ENCODE measurements at regions of chr7 and their contacts with region 1.

Region 1: GRCh38 chr7:73738612-73739374 is at the start of gene ABHD11:
- DNase-seq: peak; percentile 97 to 98 (median 97)
- H3K4me3 ChIP-seq: peak within 1 kb of the TSS; percentile 83
- H3K4me3 Mint-ChIP-seq: peak within 1 kb of the TSS; percentile 87 to 97 (median 92)
- H3K27ac ChIP-seq: peak within 1 kb of the TSS; percentile 87
- H3K27ac Mint-ChIP-seq: peak within 1 kb of the TSS; percentile 82 to 97 (median 92)
- H3K4me1 ChIP-seq: peaks cover 9% of the 10 kb centered on the region
- H3K4me1 Mint-ChIP-seq: peaks cover 11 to 24% (median 16%) of the 10 kb centered on the region in 3 donors
- H3K27me3 ChIP-seq: no peaks in the 10 kb centered on the region
- H3K27me3 Mint-ChIP-seq: peaks cover 0 to 2% of the 10 kb centered on the region in 2 donors
- total RNA-seq, gene ABHD11: 23.2 to 26.5 TPM

Region 2: GRCh38 chr7:73726083-73726466 is 12.7 kb before region 1 on chr7:
- CTCF ChIA-PET with region 1: interaction called, 36 read pairs
- POLR2A ChIA-PET with region 1: interaction called, 3 read pairs
- DNase-seq: no peak
- H3K4me3 ChIP-seq: no peak overlapping the region
- H3K4me3 Mint-ChIP-seq: no peak overlapping the region
- H3K27ac ChIP-seq: no peak overlapping the region
- H3K27ac Mint-ChIP-seq: no peak overlapping the region
- H3K4me1 ChIP-seq: no peaks in the 10 kb centered on the region
- H3K4me1 Mint-ChIP-seq: no peaks in the 10 kb centered on the region
- H3K27me3 ChIP-seq: peaks cover 6% of the 10 kb centered on the region
- H3K27me3 Mint-ChIP-seq: peaks cover 4 to 12% of the 10 kb centered on the region in 2 donors